ENCODE measurements at regions of chr5 and their contacts with region 1.

Region 1: DNA sequence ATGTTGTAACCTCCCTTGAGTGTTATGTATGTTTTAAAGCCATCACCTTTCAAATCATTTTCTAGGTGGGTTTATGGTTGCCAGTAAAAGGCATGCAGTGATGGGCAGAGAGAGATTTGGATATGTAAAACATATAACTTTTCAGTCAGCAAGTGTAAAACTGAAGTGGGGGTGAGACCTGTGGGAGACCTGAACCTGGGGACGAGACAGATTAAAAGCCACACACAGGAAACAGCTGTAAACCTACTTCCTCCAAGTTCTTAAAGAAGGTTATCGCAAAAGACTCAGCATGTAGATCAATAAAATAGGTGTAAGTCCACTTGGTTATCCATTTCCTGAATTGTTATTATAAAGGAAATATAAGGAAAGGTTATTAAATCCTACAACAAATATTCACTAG is 76.6 kb downstream of the YIPF5 start:
- DNase-seq: no peak
- ATAC-seq: no peak
- H3K4me3 ChIP-seq: no peak overlapping the region
- H3K27ac ChIP-seq: no peak overlapping the region
- H3K4me1 ChIP-seq: no peaks in the 10 kb centered on the region
- H3K27me3 ChIP-seq: peaks cover 13% of the 10 kb centered on the region; the same call in 1 of the 2 replicates
- CTCF ChIP-seq: no peak
- POLR2A ChIP-seq: no peak
- RAD21 ChIP-seq: no peak

Region 2: GRCh38 chr5:144017631-144018030 is 76.2 kb before region 1 on chr5:
- CTCF ChIA-PET with region 1: no interaction called
- POLR2A ChIA-PET with region 1: no interaction called
- RAD21 ChIA-PET with region 1: no interaction called
- intact Hi-C with region 1: loop called (anchors 2 kb)
- DNase-seq: no peak
- ATAC-seq: no peak
- H3K4me3 ChIP-seq: no peak overlapping the region
- H3K27ac ChIP-seq: no peak overlapping the region
- H3K4me1 ChIP-seq: no peaks in the 10 kb centered on the region
- H3K27me3 ChIP-seq: peaks cover 8% of the 10 kb centered on the region; the same call in 1 of the 2 replicates
- CTCF ChIP-seq: no peak
- POLR2A ChIP-seq: no peak
- RAD21 ChIP-seq: no peak

Region 3: DNA sequence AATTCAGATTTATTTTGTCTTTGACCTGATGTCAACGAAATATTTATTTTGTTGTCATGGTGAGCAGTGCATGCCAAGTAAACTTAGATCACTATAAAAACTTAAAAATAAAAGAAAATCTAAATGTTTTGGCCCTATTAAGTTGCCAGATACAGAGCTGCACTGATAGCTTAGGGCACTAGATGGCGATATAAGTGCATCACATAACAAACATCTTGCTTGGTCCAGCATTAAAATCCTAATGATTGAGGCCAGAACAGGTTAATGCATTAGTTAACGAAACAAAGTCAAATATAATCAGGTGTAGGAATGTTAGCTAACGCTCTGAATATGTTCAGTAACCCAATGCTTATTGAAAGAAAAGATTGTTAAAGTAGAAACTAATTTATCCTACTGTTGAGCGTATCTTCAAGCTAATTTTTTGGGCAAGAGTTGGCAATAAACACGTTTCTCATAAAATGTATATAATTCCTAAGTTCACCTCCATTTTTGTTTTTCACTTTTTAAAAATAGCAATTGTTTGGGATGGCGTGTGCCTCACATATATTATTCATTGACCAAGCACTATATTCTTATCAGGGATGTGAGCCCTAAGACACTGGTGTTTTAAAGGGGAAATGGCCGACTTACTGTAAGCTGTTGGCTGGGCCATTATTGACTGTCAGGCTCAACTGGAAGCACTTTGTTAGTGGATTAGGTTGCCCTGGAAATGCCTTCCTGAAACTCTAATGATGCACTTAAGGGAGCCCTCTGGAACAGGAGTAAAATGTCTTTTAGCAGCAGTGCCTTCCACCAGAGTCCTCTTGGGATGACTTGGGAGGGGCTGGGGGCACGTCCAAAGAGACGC is 110.1 kb after region 1 on chr5:
- CTCF ChIA-PET with region 1: no interaction called
- POLR2A ChIA-PET with region 1: no interaction called
- RAD21 ChIA-PET with region 1: no interaction called
- intact Hi-C with region 1: no loop called
- DNase-seq: peak; percentile 57
- ATAC-seq: peak; percentile 94
- H3K4me3 ChIP-seq: no peak overlapping the region
- H3K27ac ChIP-seq: no peak overlapping the region
- H3K4me1 ChIP-seq: no peaks in the 10 kb centered on the region
- H3K27me3 ChIP-seq: peaks cover 64% of the 10 kb centered on the region
- CTCF ChIP-seq: peak; percentile 57 to 87 (median 70); a peak in 5 of 6 replicates
- POLR2A ChIP-seq: no peak
- RAD21 ChIP-seq: peak; percentile 87

Measured in HCT116 (cell line).